Dorsolateral prefrontal cortex (tissue), 120 donors: ENCODE measurements at regions of chr2 and their contacts with region 1.

Region 1: GRCh38 chr2:137910641-137911040 is 53.6 kb upstream of the HNMT start:
- DNase-seq: no peak
- H3K4me3 ChIP-seq: no peak overlapping the region
- H3K27ac ChIP-seq: no peak overlapping the region
- H3K27me3 ChIP-seq: no peaks in the 10 kb centered on the region
- CTCF ChIP-seq: peak; percentile 34 to 92 (median 74)

Region 2: GRCh38 chr2:138090330-138090729 is 179.7 kb after region 1 on chr2:
- intact Hi-C with region 1: loop called in 1 of 2 experiments (anchors 5 kb)
- DNase-seq: no peak
- H3K4me3 ChIP-seq: no peak overlapping the region
- H3K27ac ChIP-seq: no peak overlapping the region
- H3K27me3 ChIP-seq: no peaks in the 10 kb centered on the region
- CTCF ChIP-seq: peak in 53 of 56 donors; percentile 29 to 79 (median 61)

Region 3: GRCh38 chr2:138373993-138374408 is 463.4 kb after region 1 on chr2:
- intact Hi-C with region 1: loop called in 1 of 2 experiments (anchors 5 kb)
- DNase-seq: no peak
- H3K4me3 ChIP-seq: no peak overlapping the region
- H3K27ac ChIP-seq: no peak overlapping the region
- H3K27me3 ChIP-seq: no peaks in the 10 kb centered on the region
- CTCF ChIP-seq: peak in 55 of 56 donors; percentile 44 to 80 (median 66)

Region 4: GRCh38 chr2:138787053-138787666 is 876.5 kb after region 1 on chr2:
- intact Hi-C with region 1: loop called (anchors 5 to 10 kb)
- DNase-seq: no peak
- H3K4me3 ChIP-seq: no peak overlapping the region
- H3K27ac ChIP-seq: no peak overlapping the region
- H3K27me3 ChIP-seq: peaks cover 0 to 8% (median 0%) of the 10 kb centered on the region in 45 donors
- CTCF ChIP-seq: peak; percentile 32 to 86 (median 72)

Region 5: DNA sequence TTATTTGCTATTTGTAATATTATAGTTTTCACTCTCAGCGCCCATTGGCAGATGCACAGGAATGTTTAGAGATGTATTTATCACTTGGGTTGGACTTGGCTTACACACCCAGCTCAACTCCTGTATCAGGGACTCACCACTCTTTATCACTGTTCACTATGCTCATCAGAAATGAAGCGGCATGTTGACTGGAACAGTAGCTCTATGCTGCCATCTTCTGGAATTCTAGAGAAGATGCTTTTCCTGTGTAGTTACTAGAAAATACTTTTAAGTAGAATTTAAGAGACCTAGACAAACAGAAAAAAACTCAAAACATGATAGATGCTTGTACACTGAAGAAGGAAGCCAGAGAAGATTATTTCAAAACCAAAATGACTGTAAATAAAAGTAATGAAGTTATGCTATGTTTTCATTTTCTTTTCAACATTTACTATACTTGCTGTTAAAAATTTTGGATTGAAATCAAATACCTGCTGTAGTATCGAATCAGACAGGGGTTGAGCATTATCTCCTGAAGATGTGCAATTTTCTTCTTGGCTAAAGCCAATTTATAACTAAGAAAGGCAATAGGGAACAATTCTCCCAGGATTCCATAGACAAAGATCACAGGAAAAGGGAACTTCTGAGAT is 916.9 kb after region 1 on chr2:
- intact Hi-C with region 1: loop called in 1 of 2 experiments (anchors 5 kb)
- DNase-seq: peak in 1 of 10 donors; percentile 25
- H3K4me3 ChIP-seq: no peak overlapping the region
- H3K27ac ChIP-seq: no peak overlapping the region
- H3K27me3 ChIP-seq: peaks cover 0 to 6% (median 0%) of the 10 kb centered on the region in 45 donors
- CTCF ChIP-seq: peak; percentile 55 to 94 (median 80)